ENCODE measurements at regions of chr12 and their contacts with region 1.

Region 1: GRCh38 chr12:87383680-87384079 is 645.5 kb downstream of the C12orf50 start:
- DNase-seq: no peak
- ATAC-seq: no peak
- H3K4me3 ChIP-seq: no peak overlapping the region
- H3K27ac ChIP-seq: no peak overlapping the region
- H3K4me1 ChIP-seq: no peaks in the 10 kb centered on the region
- H3K27me3 ChIP-seq: no peaks in the 10 kb centered on the region
- CTCF ChIP-seq: no peak
- POLR2A ChIP-seq: no peak

Region 2: GRCh38 chr12:87274594-87275245 is 109.0 kb before region 1 on chr12:
- in situ Hi-C with region 1: loop called in 1 of 4 experiments (anchors 25 kb)
- intact Hi-C with region 1: no loop called
- DNase-seq: no peak
- ATAC-seq: no peak
- H3K4me3 ChIP-seq: no peak overlapping the region
- H3K27ac ChIP-seq: no peak overlapping the region
- H3K4me1 ChIP-seq: no peaks in the 10 kb centered on the region
- H3K27me3 ChIP-seq: no peaks in the 10 kb centered on the region
- CTCF ChIP-seq: no peak
- POLR2A ChIP-seq: no peak

Region 3: GRCh38 chr12:87439990-87440827 is 56.5 kb after region 1 on chr12:
- in situ Hi-C with region 1: no loop called
- intact Hi-C with region 1: no loop called
- DNase-seq: no peak
- ATAC-seq: no peak
- H3K4me3 ChIP-seq: no peak overlapping the region
- H3K27ac ChIP-seq: no peak overlapping the region
- H3K4me1 ChIP-seq: no peaks in the 10 kb centered on the region
- H3K27me3 ChIP-seq: no peaks in the 10 kb centered on the region
- CTCF ChIP-seq: no peak
- POLR2A ChIP-seq: no peak